ENCODE measurements at regions of chr6 and their contacts with region 1.

Region 1: DNA sequence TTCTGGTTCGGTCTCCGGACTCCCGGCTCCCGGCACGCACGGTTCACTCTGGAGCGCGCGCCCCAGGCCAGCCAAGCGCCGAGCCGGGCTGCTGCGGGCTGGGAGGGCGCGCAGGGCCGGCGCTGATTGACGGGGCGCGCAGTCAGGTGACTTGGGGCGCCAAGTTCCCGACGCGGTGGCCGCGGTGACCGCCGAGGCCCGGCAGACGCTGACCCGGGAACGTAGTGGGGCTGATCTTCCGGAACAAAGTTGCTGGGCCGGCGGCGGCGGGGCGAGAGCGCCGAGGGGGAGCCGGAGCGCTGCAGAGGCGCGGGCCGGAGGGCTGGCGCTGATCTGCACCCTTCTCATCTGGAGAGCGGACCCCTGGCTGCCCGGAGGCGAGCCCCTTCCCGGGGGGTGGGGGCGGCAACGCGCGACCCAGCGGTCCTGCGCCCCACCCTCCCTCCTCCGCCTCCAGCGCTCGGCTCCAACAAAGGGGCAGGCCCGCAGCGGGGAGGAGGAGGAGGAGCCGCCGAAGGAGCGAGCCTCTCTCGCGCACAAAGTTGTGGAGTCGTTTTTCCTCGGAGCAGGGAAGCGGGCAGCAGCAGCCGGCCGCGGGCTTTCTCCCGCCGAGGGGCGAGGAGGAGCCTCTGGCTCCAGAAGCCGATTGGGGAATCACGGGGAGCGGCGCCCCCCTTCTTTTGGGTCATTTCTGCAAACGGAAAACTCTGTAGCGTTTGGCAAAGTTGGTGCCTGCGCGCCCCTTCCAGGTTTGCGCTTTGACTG is at the start of gene UTRN:
- DNase-seq: peak; percentile 89
- H3K4me3 ChIP-seq: peak within 1 kb of the TSS; percentile 87
- H3K27ac ChIP-seq: peak within 1 kb of the TSS; percentile 83
- H3K4me1 ChIP-seq: no peaks in the 10 kb centered on the region
- H3K27me3 ChIP-seq: no peaks in the 10 kb centered on the region
- CTCF ChIP-seq: peak; percentile 14; the same call in 1 of the 2 replicates
- total RNA-seq, gene UTRN: 75.2 and 82.8 TPM in 2 replicates

Region 2: GRCh38 chr6:143556529-143556928 is 728.4 kb before region 1 on chr6:
- CTCF ChIA-PET with region 1: no interaction called
- POLR2A ChIA-PET with region 1: no interaction called
- intact Hi-C with region 1: no loop called
- DNase-seq: peak; percentile 48
- H3K4me3 ChIP-seq: no peak overlapping the region
- H3K27ac ChIP-seq: no peak overlapping the region
- H3K4me1 ChIP-seq: peaks cover 4% of the 10 kb centered on the region
- H3K27me3 ChIP-seq: no peaks in the 10 kb centered on the region
- CTCF ChIP-seq: no peak

Region 3: DNA sequence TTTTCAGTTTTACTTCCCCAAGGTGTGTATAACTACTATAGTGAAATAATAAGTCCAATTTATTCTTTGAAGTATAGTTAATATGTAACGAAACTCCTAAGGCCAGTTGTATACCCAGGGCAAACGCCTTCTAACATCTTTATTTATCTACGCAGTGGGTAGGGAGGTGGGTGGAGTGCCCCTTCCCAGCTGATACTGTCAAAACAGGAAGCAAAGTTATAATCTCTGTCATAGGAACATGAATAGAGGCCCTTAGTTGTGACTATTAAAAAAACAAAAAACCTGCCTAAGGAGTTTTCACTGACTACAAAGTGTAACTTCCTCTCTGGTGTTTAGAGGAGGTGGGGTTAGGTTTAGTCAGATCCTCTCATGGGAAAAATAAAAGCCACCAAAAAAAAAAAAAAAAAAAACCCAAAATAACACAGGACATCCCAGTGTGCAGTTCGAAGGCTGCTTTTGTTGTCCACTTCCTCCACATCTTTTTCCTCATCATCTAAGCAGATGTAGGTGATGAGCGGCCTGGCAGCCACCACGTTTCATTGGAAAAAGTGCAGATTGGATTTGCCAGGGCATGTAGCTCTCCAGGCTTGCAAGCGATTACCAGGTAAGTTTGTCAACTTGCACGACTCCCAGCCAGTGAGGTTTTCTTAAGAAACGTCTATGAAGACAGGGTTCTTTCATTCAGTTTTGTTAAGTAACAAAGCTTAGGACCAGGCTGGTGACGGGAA is 58.9 kb after region 1 on chr6:
- CTCF ChIA-PET with region 1: no interaction called
- POLR2A ChIA-PET with region 1: no interaction called
- intact Hi-C with region 1: loop called (anchors 5 kb)
- DNase-seq: peak; percentile 83
- H3K4me3 ChIP-seq: peak overlapping the region; percentile 16
- H3K27ac ChIP-seq: peak overlapping the region; percentile 72
- H3K4me1 ChIP-seq: peaks cover 70% of the 10 kb centered on the region
- H3K27me3 ChIP-seq: no peaks in the 10 kb centered on the region
- CTCF ChIP-seq: no peak

Region 4: DNA sequence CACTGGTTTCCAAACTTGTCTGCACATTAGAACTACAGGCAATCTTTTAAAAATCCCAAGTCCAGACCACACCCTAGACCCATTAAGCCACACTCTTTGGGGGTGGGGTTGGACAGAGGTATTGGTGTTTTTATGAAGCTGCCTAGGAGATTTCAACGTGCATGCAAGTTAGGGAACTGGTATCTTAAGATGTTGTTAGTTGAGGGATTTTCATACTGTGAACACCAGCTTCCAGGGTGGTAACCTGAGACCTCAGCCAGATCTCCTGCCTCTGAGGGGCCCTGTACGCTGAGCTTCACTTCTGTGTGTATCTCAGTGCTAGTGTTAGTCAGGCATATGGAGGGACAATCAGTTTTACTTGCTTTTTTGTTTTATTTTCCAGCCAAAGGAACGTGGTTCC is 138.2 kb after region 1 on chr6:
- CTCF ChIA-PET with region 1: no interaction called
- POLR2A ChIA-PET with region 1: no interaction called
- intact Hi-C with region 1: no loop called
- DNase-seq: no peak
- H3K4me3 ChIP-seq: no peak overlapping the region
- H3K27ac ChIP-seq: no peak overlapping the region
- H3K4me1 ChIP-seq: no peaks in the 10 kb centered on the region
- H3K27me3 ChIP-seq: no peaks in the 10 kb centered on the region
- CTCF ChIP-seq: no peak

Region 5: GRCh38 chr6:144482142-144482541 is 197.2 kb after region 1 on chr6:
- CTCF ChIA-PET with region 1: no interaction called
- POLR2A ChIA-PET with region 1: interaction called, 3 read pairs
- intact Hi-C with region 1: loop called (anchors 10 kb)
- DNase-seq: peak; percentile 86
- H3K4me3 ChIP-seq: no peak overlapping the region
- H3K27ac ChIP-seq: no peak overlapping the region
- H3K4me1 ChIP-seq: no peaks in the 10 kb centered on the region
- H3K27me3 ChIP-seq: no peaks in the 10 kb centered on the region
- CTCF ChIP-seq: peak; percentile 80

Measured in A673 (cell line).